ENCODE measurements at regions of chr14 and their contacts with region 1.

Region 1: GRCh38 chr14:91114079-91115065 is 499 bp downstream of the DGLUCY start:
- H3K4me3 Mint-ChIP-seq: peak overlapping the region; percentile 83
- H3K27ac Mint-ChIP-seq: peak overlapping the region; percentile 93
- H3K4me1 Mint-ChIP-seq: peaks cover 73% of the 10 kb centered on the region
- H3K27me3 Mint-ChIP-seq: no peaks in the 10 kb centered on the region

Region 2: DNA sequence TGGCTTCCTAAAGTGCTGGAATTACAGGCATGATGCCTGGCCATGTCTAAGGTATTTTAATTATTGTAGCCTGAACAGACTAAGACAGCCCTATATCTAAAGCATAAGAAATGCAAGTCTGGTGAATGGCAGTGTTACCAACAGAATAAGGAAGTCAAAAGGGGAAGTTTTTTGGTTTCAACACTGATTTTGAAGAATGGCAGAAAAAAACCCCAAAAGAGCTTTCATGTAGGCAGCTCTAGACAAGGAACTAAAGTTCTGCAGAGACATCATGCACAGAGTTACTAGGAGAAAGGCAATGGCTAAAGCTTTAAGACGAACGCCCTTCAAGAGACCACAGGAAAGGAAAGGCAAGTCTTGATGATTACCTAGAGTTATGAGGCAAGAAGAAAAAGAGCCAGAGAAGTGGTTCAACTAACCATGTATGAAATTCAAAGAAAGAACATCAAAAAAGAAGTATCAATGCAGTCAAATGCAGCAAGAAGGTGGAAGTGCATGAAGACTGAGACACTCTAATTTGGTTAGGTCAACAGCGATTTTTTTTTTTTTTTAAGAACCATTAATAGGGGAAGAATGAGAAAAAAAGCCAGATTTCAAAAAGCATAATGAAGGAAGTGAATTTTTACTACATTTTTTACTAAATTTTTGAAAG is 104.7 kb before region 1 on chr14:
- intact Hi-C with region 1: loop called (anchors 5 kb)
- H3K4me3 Mint-ChIP-seq: peak overlapping the region; percentile 67
- H3K27ac Mint-ChIP-seq: peak overlapping the region; percentile 94
- H3K4me1 Mint-ChIP-seq: peaks cover 46% of the 10 kb centered on the region
- H3K27me3 Mint-ChIP-seq: no peaks in the 10 kb centered on the region

Region 3: DNA sequence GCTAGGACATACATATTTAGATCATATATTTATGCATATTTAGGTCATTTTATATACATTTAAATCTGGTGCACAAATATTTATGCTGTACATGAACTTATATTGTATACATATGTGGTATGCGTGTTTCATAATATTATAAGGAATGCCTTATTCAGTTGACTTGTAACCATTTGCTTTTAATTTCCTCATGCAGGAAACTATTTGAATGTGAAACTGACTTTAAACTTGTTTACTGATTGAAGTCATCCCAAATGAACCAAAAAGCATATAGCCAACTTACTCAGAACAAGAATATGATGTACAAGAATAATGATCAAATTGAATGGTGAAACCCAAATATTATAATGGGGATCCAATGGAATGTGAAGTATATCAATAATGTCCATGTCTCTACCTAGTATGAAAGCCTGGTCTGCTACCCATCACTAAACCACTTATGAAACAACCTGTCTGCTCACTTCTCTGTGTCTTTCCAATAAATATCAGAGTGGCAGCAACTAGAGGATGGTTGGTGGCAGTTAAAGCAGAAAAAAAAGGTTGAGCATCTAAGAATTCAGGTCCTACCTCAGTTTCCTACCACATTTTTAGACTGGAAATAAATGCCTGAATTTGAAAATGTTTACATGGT is 92.3 kb before region 1 on chr14:
- intact Hi-C with region 1: loop called (anchors 2 kb)
- H3K4me3 Mint-ChIP-seq: peak overlapping the region; percentile 39
- H3K27ac Mint-ChIP-seq: peak overlapping the region; percentile 71
- H3K4me1 Mint-ChIP-seq: peaks cover 17% of the 10 kb centered on the region
- H3K27me3 Mint-ChIP-seq: no peaks in the 10 kb centered on the region

Region 4: GRCh38 chr14:91060351-91061055 is 53.9 kb before region 1 on chr14 and contains the start of gene RPS6KA5:
- intact Hi-C with region 1: loop called (anchors 1 kb)
- H3K4me3 Mint-ChIP-seq: peak within 1 kb of the TSS; percentile 78
- H3K27ac Mint-ChIP-seq: no peak within 1 kb of the TSS
- H3K4me1 Mint-ChIP-seq: peaks cover 19% of the 10 kb centered on the region
- H3K27me3 Mint-ChIP-seq: no peaks in the 10 kb centered on the region

Region 5: GRCh38 chr14:91402771-91403600 is 288.6 kb after region 1 on chr14:
- intact Hi-C with region 1: no loop called
- H3K4me3 Mint-ChIP-seq: peak overlapping the region; percentile 9
- H3K27ac Mint-ChIP-seq: peak overlapping the region; percentile 57
- H3K4me1 Mint-ChIP-seq: peaks cover 43% of the 10 kb centered on the region
- H3K27me3 Mint-ChIP-seq: peaks cover 9% of the 10 kb centered on the region

Measured in dendritic cell treated with granulocyte-macrophage colony-stimulating factor and Interleukin-4, amounts not matched to agents 40 ng/mL and 50 ng/mL, for 4 days (primary cell).